ENCODE measurements at regions of chr1 and their contacts with region 1.

Region 1: GRCh38 chr1:44819608-44820327 is 11.4 kb downstream of the BTBD19 start:
- DNase-seq: peak; percentile 96
- ATAC-seq: peak; percentile 93
- H3K4me3 ChIP-seq: peak overlapping the region; percentile 36 to 48
- H3K27ac ChIP-seq: peak overlapping the region; percentile 83
- H3K4me1 ChIP-seq: peaks cover 11 to 37% of the 10 kb centered on the region in 2 experiments
- H3K27me3 ChIP-seq: no peaks in the 10 kb centered on the region
- CTCF ChIP-seq: 0 out of 6 replicates have a peak, but pooled peaks of 1 of the 3 experiments have one; percentile 9
- POLR2A ChIP-seq: peak; percentile 100
- RAD21 ChIP-seq: peak; percentile 52

Region 2: GRCh38 chr1:44775078-44775929 is 44.5 kb before region 1 on chr1 and contains the start of gene RPS8:
- CTCF ChIA-PET with region 1: no interaction called
- POLR2A ChIA-PET with region 1: interaction called, 13 read pairs
- RAD21 ChIA-PET with region 1: no interaction called
- intact Hi-C with region 1: no loop called
- DNase-seq: peak; percentile 85
- ATAC-seq: peak; percentile 76
- H3K4me3 ChIP-seq: peak within 1 kb of the TSS; percentile 92 to 99
- H3K27ac ChIP-seq: peak within 1 kb of the TSS; percentile 86
- H3K4me1 ChIP-seq: peaks cover 10 to 24% of the 10 kb centered on the region in 2 experiments
- H3K27me3 ChIP-seq: no peaks in the 10 kb centered on the region
- CTCF ChIP-seq: no peak
- POLR2A ChIP-seq: peak; percentile 97
- RAD21 ChIP-seq: no peak
- total RNA-seq, gene RPS8: 2,296 TPM

Region 3: DNA sequence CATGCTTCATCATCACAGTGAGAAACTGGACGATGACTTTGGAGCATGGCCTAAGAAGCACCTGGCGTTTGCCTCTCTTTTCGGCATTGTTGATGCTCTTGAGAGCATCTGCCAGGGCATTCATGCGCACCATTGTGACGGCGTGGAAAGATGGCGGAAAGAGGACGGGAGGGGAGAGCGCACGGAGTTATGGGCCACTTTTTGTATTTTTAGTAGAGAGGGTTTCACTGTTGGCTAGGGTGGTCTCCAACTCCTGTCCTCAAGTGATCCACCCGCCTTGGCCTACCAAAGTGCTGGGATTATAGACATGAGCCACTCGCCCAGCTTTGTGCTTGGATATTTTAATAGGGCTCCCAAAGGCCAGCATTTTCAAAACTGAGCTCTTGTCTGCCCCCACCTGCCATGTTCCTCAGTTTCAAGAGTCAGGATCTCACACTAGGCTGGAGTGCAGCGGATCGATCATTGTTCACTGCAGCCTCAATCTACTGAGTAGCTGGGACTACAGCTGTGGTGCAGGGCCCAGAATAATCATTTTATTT is 39.1 kb before region 1 on chr1:
- CTCF ChIA-PET with region 1: no interaction called
- POLR2A ChIA-PET with region 1: interaction called, 13 read pairs
- RAD21 ChIA-PET with region 1: no interaction called
- intact Hi-C with region 1: no loop called
- DNase-seq: no peak
- ATAC-seq: peak; percentile 28
- H3K4me3 ChIP-seq: no peak overlapping the region
- H3K27ac ChIP-seq: no peak overlapping the region
- H3K4me1 ChIP-seq: peaks cover 10 to 19% of the 10 kb centered on the region in 2 experiments
- H3K27me3 ChIP-seq: no peaks in the 10 kb centered on the region
- CTCF ChIP-seq: no peak
- POLR2A ChIP-seq: no peak
- RAD21 ChIP-seq: no peak

Region 4: GRCh38 chr1:44792783-44793714 is 26.7 kb before region 1 on chr1:
- CTCF ChIA-PET with region 1: interaction called, 7 read pairs
- POLR2A ChIA-PET with region 1: interaction called, 86 read pairs
- RAD21 ChIA-PET with region 1: interaction called, 3 to 4 read pairs
- intact Hi-C with region 1: no loop called
- DNase-seq: no peak
- ATAC-seq: no peak
- H3K4me3 ChIP-seq: peak overlapping the region in 1 of 2 experiments; percentile 8; a peak in 1 of 4 replicates
- H3K27ac ChIP-seq: peak overlapping the region; percentile 58
- H3K4me1 ChIP-seq: peaks cover 14 to 30% of the 10 kb centered on the region in 2 experiments; a peak in 3 of 4 replicates
- H3K27me3 ChIP-seq: no peaks in the 10 kb centered on the region
- CTCF ChIP-seq: no peak
- POLR2A ChIP-seq: no peak
- RAD21 ChIP-seq: no peak

Region 5: GRCh38 chr1:44799770-44800584 is 19.8 kb before region 1 on chr1 and contains the start of gene PLK3:
- CTCF ChIA-PET with region 1: interaction called, 8 read pairs
- POLR2A ChIA-PET with region 1: interaction called, 200 read pairs
- RAD21 ChIA-PET with region 1: interaction called in 1 of 2 experiments, 3 read pairs
- intact Hi-C with region 1: no loop called
- DNase-seq: peak; percentile 96
- ATAC-seq: peak; percentile 86
- H3K4me3 ChIP-seq: peak within 1 kb of the TSS; percentile 87 to 91
- H3K27ac ChIP-seq: peak within 1 kb of the TSS; percentile 84
- H3K4me1 ChIP-seq: peaks cover 19 to 71% of the 10 kb centered on the region in 2 experiments
- H3K27me3 ChIP-seq: no peaks in the 10 kb centered on the region
- CTCF ChIP-seq: peak in 2 of 3 experiments; percentile 81 to 91; a peak in 4 of 6 replicates
- POLR2A ChIP-seq: peak; percentile 97
- RAD21 ChIP-seq: no peak
- total RNA-seq, gene PLK3: 56.1 TPM

Region 6: DNA sequence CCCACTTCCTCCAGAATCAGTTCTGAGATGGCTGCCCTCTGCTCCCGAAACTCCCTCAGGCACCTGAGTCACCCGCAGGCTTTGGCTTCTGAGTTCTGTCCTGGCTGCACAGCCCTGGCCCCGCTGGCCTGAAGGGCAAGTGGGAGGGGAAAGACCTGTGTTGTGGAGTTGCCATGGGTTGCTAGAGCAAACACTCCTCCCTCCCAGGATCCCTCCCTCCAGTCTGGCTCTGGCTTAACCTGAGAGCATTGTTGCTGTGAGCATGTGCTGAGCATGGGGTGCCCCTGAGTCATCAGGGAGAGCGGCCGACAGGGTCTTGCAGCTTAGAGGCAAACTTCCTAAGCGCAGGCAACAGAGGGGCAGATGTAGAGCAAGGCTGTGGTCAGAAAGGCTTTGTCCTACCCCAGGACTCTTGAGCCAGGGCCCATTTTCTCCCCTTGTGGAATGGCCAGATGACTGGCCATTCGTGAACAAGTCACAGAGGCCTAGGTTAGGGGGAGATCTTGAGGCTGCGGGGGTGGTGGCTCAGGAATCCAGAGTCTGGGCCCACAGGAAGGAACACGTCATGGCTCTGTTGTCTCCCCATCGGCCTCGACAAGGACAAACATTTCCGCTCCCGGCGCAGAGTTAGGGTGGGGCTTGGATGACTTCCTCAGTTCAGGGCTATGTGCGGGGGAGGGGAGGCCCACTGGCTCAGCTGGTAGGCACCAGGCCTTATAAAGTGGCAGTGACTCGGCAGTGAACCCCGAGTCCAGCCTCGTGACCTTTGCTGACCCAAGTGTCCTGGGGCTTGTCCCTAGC is 12.3 kb before region 1 on chr1 and contains the start of gene DYNLT4:
- CTCF ChIA-PET with region 1: interaction called, 4 read pairs
- POLR2A ChIA-PET with region 1: interaction called, 200 read pairs
- RAD21 ChIA-PET with region 1: no interaction called
- intact Hi-C with region 1: no loop called
- DNase-seq: peak; percentile 98
- ATAC-seq: peak; percentile 74
- H3K4me3 ChIP-seq: peak within 1 kb of the TSS; percentile 30 to 32
- H3K27ac ChIP-seq: peak within 1 kb of the TSS; percentile 98
- H3K4me1 ChIP-seq: peaks cover 58 to 96% of the 10 kb centered on the region in 2 experiments
- H3K27me3 ChIP-seq: no peaks in the 10 kb centered on the region
- CTCF ChIP-seq: no peak
- POLR2A ChIP-seq: peak; percentile 58
- RAD21 ChIP-seq: no peak
- total RNA-seq, gene DYNLT4: 0.96 TPM

Region 7: GRCh38 chr1:44830900-44831304 is 11.1 kb after region 1 on chr1:
- CTCF ChIA-PET with region 1: interaction called, 4 read pairs
- POLR2A ChIA-PET with region 1: interaction called, 18 read pairs
- RAD21 ChIA-PET with region 1: no interaction called
- intact Hi-C with region 1: no loop called
- DNase-seq: no peak
- ATAC-seq: no peak
- H3K4me3 ChIP-seq: no peak overlapping the region
- H3K27ac ChIP-seq: no peak overlapping the region
- H3K4me1 ChIP-seq: peaks cover 0 to 6% of the 10 kb centered on the region in 2 experiments; a peak in 1 of 4 replicates
- H3K27me3 ChIP-seq: no peaks in the 10 kb centered on the region
- CTCF ChIP-seq: no peak
- POLR2A ChIP-seq: no peak
- RAD21 ChIP-seq: no peak

Measured in HCT116 (cell line).